CD8-positive, alpha-beta memory T cell (primary cell): ENCODE measurements at regions of chrX and their contacts with region 1.

Region 1: GRCh38 chrX:48761674-48762471 is at the start of gene GLOD5:
- DNase-seq: no peak
- H3K4me3 ChIP-seq: no peak within 1 kb of the TSS
- H3K4me3 Mint-ChIP-seq: no peak within 1 kb of the TSS
- H3K27ac ChIP-seq: no peak within 1 kb of the TSS
- H3K27ac Mint-ChIP-seq: no peak within 1 kb of the TSS
- H3K4me1 ChIP-seq: no peaks in the 10 kb centered on the region
- H3K4me1 Mint-ChIP-seq: peaks cover 0 to 3% (median 0%) of the 10 kb centered on the region in 3 donors
- H3K27me3 ChIP-seq: no peaks in the 10 kb centered on the region
- H3K27me3 Mint-ChIP-seq: peaks cover 3 to 9% of the 10 kb centered on the region in 2 donors
- total RNA-seq, gene GLOD5: not detected

Region 2: GRCh38 chrX:48617542-48618340 is 144.1 kb before region 1 on chrX:
- CTCF ChIA-PET with region 1: no interaction called
- POLR2A ChIA-PET with region 1: no interaction called
- DNase-seq: no peak
- H3K4me3 ChIP-seq: no peak overlapping the region
- H3K4me3 Mint-ChIP-seq: no peak overlapping the region
- H3K27ac ChIP-seq: no peak overlapping the region
- H3K27ac Mint-ChIP-seq: no peak overlapping the region
- H3K4me1 ChIP-seq: no peaks in the 10 kb centered on the region
- H3K4me1 Mint-ChIP-seq: no peaks in the 10 kb centered on the region
- H3K27me3 ChIP-seq: no peaks in the 10 kb centered on the region
- H3K27me3 Mint-ChIP-seq: peaks cover 0 to 1% of the 10 kb centered on the region in 2 donors

Region 3: DNA sequence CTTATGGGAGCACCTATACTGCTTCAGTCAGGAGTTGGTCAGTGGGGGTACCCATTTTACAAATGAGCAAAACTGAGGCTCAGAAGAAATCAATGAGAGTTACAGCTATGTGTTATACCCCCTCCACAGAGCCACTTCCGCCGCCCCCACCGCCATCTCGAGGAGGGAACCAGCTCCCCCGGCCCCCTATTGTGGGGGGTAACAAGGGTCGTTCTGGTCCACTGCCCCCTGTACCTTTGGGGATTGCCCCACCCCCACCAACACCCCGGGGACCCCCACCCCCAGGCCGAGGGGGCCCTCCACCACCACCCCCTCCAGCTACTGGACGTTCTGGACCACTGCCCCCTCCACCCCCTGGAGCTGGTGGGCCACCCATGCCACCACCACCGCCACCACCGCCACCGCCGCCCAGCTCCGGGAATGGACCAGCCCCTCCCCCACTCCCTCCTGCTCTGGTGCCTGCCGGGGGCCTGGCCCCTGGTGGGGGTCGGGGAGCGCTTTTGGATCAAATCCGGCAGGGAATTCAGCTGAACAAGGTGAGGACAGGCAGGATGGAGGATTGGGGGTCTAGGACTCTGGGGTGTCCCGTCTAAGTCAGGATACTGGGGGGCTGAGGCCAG is 73.2 kb before region 1 on chrX:
- CTCF ChIA-PET with region 1: no interaction called
- POLR2A ChIA-PET with region 1: interaction called, 14 read pairs
- DNase-seq: no peak
- H3K4me3 ChIP-seq: no peak overlapping the region
- H3K4me3 Mint-ChIP-seq: no peak overlapping the region
- H3K27ac ChIP-seq: no peak overlapping the region
- H3K27ac Mint-ChIP-seq: peak overlapping the region in 1 of 8 donors; percentile 19
- H3K4me1 ChIP-seq: peaks cover 29% of the 10 kb centered on the region
- H3K4me1 Mint-ChIP-seq: peaks cover 32 to 43% (median 37%) of the 10 kb centered on the region in 3 donors
- H3K27me3 ChIP-seq: no peaks in the 10 kb centered on the region
- H3K27me3 Mint-ChIP-seq: peaks cover 0 to 2% of the 10 kb centered on the region in 2 donors

Region 4: DNA sequence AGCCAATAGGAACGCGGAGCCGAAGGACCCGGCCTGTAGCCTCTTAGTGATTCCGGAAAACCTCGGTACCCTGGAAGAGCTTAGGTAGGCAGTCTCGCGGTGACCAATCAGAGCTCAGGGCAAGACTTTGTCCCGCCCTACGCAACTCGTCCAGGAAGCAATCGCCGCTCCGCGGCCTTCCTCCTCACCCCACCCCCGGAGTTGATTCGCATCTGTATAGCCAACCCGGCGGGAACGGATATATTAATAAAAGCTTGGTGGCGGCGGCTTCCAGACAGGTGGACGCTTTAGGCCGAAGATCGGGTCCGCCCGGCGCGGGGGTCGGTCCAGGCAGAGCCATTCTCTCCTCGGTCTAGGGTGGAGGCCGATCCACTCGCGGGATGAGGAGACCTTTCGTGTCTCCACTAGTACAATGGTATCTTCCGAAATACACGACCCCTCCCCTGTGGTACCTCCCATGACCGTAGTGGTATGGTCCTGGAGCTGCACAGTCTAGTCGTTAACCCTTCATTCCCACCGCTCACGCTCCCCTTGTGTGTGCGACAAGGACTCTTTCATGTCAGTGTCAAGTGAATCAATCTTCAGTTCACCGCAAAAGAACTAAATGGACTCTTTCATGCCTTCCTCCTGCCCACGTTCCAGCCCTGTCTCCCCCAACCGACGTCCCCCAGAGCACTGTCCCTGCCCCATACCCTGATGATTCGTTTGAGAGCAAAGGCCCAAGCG is 24.5 kb before region 1 on chrX:
- CTCF ChIA-PET with region 1: no interaction called
- POLR2A ChIA-PET with region 1: no interaction called
- DNase-seq: peak; percentile 74 to 95 (median 88)
- H3K4me3 ChIP-seq: peak overlapping the region; percentile 66
- H3K4me3 Mint-ChIP-seq: peak overlapping the region; percentile 90 to 96 (median 93)
- H3K27ac ChIP-seq: peak overlapping the region; percentile 86
- H3K27ac Mint-ChIP-seq: peak overlapping the region; percentile 94 to 99 (median 96)
- H3K4me1 ChIP-seq: peaks cover 17% of the 10 kb centered on the region
- H3K4me1 Mint-ChIP-seq: peaks cover 17 to 23% (median 18%) of the 10 kb centered on the region in 3 donors
- H3K27me3 ChIP-seq: no peaks in the 10 kb centered on the region
- H3K27me3 Mint-ChIP-seq: peaks cover 0 to 7% of the 10 kb centered on the region in 2 donors